Activated CD8-positive, alpha-beta memory T cell treated with anti-CD3 and anti-CD28 coated beads, Interleukin-2, amount 10 ng/mL, durations not matched to agents 7 days and 5 days (primary cell): ENCODE measurements at regions of chr22 and their contacts with region 1.

Region 1: DNA sequence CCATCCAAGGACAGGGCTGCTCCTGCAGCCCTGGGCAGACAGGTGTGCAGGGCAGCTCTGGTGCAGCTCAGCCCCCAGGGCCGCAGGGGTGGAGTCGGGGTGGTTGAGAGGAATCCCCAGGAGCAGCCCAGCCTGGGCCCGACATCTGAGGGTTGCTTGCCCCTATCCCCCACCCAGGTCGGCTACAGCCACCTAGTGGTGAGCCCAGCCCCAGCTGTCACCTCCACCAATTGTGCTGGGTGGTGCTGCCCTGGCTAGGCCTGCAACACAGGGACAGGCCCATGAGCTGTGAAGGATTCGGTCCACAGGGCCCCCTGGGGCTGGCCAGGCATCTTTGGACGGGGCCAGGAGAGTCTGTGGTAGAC is 29.6 kb downstream of the RTN4R start:
- DNase-seq: peak; percentile 88
- ATAC-seq: peak; percentile 81
- H3K4me3 Mint-ChIP-seq: peak overlapping the region; percentile 55
- H3K27ac Mint-ChIP-seq: peak overlapping the region; percentile 90
- H3K4me1 Mint-ChIP-seq: peaks cover 30% of the 10 kb centered on the region
- H3K27me3 Mint-ChIP-seq: no peaks in the 10 kb centered on the region

Region 2: GRCh38 chr22:20156611-20157429 is 81.7 kb before region 1 on chr22:
- CTCF ChIA-PET with region 1: interaction called, 47 read pairs
- DNase-seq: peak; percentile 91
- ATAC-seq: peak; percentile 85
- H3K4me3 Mint-ChIP-seq: no peak overlapping the region
- H3K27ac Mint-ChIP-seq: no peak overlapping the region
- H3K4me1 Mint-ChIP-seq: no peaks in the 10 kb centered on the region
- H3K27me3 Mint-ChIP-seq: no peaks in the 10 kb centered on the region

Region 3: GRCh38 chr22:20174785-20175596 is 63.5 kb before region 1 on chr22:
- CTCF ChIA-PET with region 1: interaction called, 10 read pairs
- DNase-seq: no peak
- ATAC-seq: no peak
- H3K4me3 Mint-ChIP-seq: no peak overlapping the region
- H3K27ac Mint-ChIP-seq: no peak overlapping the region
- H3K4me1 Mint-ChIP-seq: no peaks in the 10 kb centered on the region
- H3K27me3 Mint-ChIP-seq: no peaks in the 10 kb centered on the region

Region 4: DNA sequence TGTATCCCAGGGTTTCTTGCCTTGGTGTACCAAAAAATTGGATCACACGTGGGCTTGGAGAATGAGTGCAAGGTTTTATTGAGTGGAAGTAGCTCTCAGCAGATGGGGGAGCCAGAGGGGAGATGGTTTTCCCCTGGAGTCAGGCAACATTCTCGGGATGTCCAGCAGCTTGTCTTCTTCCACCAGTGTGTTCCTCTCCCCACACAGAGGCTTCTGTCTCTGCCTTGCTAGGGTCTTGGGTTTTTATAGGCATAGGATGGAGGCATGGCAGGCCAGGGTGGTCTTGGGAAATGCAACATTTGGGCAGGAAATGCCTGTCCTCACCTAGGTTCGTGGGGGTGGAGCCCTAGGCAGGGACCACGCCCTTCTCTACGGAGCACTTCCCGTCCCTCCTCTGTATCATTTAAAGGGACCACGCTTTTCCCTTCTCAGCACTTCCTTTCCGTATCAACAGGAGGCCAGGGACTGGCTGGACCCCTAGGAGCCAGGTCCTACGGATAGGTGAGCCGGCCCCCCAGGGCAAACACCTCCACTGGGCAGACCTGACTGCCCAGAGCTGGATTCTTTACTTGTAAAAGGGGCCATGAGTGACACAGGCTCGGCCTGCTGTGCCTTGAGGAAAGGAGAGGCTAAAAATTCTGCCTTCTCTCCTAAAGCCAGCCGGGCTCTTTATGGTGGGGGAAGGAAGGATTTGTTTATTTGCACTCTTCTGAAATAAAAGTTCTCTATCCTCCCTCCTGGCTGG is 32.4 kb before region 1 on chr22:
- CTCF ChIA-PET with region 1: interaction called, 18 read pairs
- DNase-seq: peak; percentile 84
- ATAC-seq: peak; percentile 91
- H3K4me3 Mint-ChIP-seq: peak overlapping the region; percentile 86
- H3K27ac Mint-ChIP-seq: peak overlapping the region; percentile 87
- H3K4me1 Mint-ChIP-seq: peaks cover 16% of the 10 kb centered on the region
- H3K27me3 Mint-ChIP-seq: no peaks in the 10 kb centered on the region

Region 5: GRCh38 chr22:20258584-20259326 is 20.2 kb after region 1 on chr22:
- CTCF ChIA-PET with region 1: interaction called, 11 read pairs
- DNase-seq: no peak
- ATAC-seq: no peak
- H3K4me3 Mint-ChIP-seq: no peak overlapping the region
- H3K27ac Mint-ChIP-seq: no peak overlapping the region
- H3K4me1 Mint-ChIP-seq: peaks cover 9% of the 10 kb centered on the region
- H3K27me3 Mint-ChIP-seq: no peaks in the 10 kb centered on the region